SK-N-SH (cell line): ENCODE measurements at regions of chr2 and their contacts with region 1.

Region 1: GRCh38 chr2:204145263-204145751 is 208.7 kb downstream of the ICOS start:
- DNase-seq: peak; percentile 72
- H3K4me3 ChIP-seq: peak overlapping the region in 1 of 2 experiments; percentile 45; a peak in 1 of 4 replicates
- H3K27ac ChIP-seq: no peak overlapping the region
- H3K4me1 ChIP-seq: peaks cover 0 to 2% of the 10 kb centered on the region in 2 experiments; a peak in 1 of 4 replicates
- H3K27me3 ChIP-seq: no peaks in the 10 kb centered on the region; the same call in 1 of the 2 replicates
- CTCF ChIP-seq: peak; percentile 97
- EP300 ChIP-seq: no peak
- RAD21 ChIP-seq: peak; percentile 95

Region 2: GRCh38 chr2:204177977-204178540 is 32.8 kb after region 1 on chr2:
- CTCF ChIA-PET with region 1: interaction called, 10 read pairs
- POLR2A ChIA-PET with region 1: no interaction called
- DNase-seq: no peak
- H3K4me3 ChIP-seq: no peak overlapping the region; a peak in 1 of 4 replicates
- H3K27ac ChIP-seq: peak overlapping the region in 1 of 2 experiments; percentile 50; a peak in 1 of 4 replicates
- H3K4me1 ChIP-seq: peaks cover 0 to 22% of the 10 kb centered on the region in 2 experiments; a peak in 2 of 4 replicates
- H3K27me3 ChIP-seq: no peaks in the 10 kb centered on the region
- CTCF ChIP-seq: peak; percentile 57
- EP300 ChIP-seq: no peak
- RAD21 ChIP-seq: no peak

Region 3: DNA sequence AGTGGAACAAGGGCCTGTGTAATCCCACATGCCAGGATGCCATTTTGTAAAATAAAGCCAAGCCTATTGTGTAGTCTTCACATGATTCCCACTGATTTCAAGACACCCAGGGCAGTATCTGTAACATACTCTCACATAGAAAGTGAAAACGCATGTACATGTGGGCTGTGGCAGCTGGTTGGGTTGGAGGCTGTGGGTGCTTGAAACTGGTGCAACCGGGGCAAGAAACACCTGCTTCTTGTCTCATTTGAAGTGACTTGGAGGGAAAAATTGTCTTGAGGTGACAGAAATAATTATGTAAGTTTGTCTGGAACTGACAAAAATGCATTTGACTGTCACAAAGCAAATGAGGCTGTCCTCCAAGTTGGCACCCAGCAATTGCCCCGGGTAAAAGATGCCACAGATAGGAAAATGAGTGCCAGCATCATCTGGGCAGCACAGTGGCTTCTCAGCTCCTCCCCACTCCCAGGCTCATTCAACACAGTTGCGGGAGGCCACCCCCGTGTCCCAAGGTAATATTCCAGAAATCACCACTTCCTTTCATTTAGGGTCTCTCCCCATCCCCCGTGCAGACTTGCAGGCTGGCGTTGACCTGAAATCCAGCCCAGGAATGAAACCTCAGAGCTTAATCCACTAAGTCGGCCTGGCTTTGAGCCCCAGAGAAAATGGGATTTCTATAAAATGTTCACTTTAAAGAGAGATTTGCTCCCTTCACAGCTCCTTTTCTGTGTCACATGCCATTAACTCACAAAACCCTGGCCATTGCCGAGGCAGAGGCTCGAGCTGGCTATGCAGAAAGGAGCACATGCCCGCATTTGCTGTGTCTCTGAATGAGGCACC is 106.1 kb after region 1 on chr2:
- CTCF ChIA-PET with region 1: interaction called, 10 read pairs
- POLR2A ChIA-PET with region 1: no interaction called
- DNase-seq: no peak
- H3K4me3 ChIP-seq: no peak overlapping the region
- H3K27ac ChIP-seq: peak overlapping the region in 1 of 2 experiments; percentile 22; a peak in 1 of 4 replicates
- H3K4me1 ChIP-seq: peaks cover 0 to 10% of the 10 kb centered on the region in 2 experiments; a peak in 1 of 4 replicates
- H3K27me3 ChIP-seq: no peaks in the 10 kb centered on the region; the same call in 1 of the 2 replicates
- CTCF ChIP-seq: no peak
- EP300 ChIP-seq: no peak
- RAD21 ChIP-seq: no peak

Region 4: GRCh38 chr2:204325468-204325867 is 180.2 kb after region 1 on chr2:
- CTCF ChIA-PET with region 1: interaction called, 12 read pairs
- POLR2A ChIA-PET with region 1: no interaction called
- DNase-seq: peak; percentile 72
- H3K4me3 ChIP-seq: 0 out of 4 replicates have a peak overlapping the region, but pooled peaks of 1 of the 2 experiments have one; percentile 23
- H3K27ac ChIP-seq: no peak overlapping the region
- H3K4me1 ChIP-seq: peaks cover 2 to 5% of the 10 kb centered on the region in 2 experiments; a peak in 2 of 4 replicates
- H3K27me3 ChIP-seq: no peaks in the 10 kb centered on the region
- CTCF ChIP-seq: peak; percentile 92
- EP300 ChIP-seq: no peak
- RAD21 ChIP-seq: peak; percentile 98

Region 5: DNA sequence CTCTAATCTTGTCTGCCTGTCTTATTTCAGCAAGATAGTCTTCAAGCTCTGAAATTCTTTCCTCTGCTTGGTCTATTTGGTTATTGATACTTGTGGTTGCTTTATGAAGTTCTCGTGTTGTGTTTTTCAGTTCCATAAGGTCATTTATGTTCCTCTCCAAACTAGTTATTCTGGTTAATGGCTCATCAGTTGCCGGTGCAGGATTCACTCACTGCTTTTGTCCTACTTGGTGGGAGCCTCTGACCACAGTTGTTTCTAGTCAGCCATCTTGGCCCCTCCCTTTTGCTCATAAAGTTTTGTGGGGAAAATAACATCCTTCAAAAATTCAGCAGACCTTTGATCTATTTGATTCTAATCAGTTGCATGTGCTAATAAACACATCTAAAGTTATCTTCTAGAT is 241.4 kb after region 1 on chr2:
- CTCF ChIA-PET with region 1: no interaction called
- POLR2A ChIA-PET with region 1: no interaction called
- DNase-seq: no peak
- H3K4me3 ChIP-seq: no peak overlapping the region
- H3K27ac ChIP-seq: no peak overlapping the region
- H3K4me1 ChIP-seq: no peaks in the 10 kb centered on the region
- H3K27me3 ChIP-seq: no peaks in the 10 kb centered on the region
- CTCF ChIP-seq: no peak
- EP300 ChIP-seq: no peak
- RAD21 ChIP-seq: no peak

Region 6: DNA sequence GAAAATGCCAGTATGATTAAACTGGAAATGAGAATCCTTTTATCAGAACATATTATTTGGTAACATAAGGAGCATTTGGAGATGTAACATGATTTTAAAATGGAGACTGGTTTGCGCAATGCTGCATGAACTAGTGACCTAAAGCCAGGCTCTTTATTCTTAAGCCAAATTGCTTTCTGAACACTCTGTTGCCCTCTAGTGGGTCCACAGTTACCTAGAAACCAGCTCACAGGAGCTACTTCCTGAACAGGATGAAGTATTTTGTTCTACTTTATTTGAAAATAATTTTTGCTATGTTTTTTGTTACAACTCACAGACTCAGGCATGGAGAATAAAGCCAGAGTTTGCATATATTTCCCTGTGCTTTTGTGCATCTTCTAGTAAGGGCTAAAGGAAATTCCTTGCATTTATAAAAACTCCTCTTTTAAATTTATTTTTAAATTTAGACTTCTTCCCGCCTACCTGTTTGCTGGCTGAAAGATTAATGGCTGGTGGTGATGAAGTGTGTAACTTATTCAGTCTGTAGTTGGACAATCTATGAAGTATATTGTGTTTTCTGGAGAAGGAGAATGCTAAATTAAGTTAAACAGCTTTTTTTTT is 546.7 kb after region 1 on chr2:
- CTCF ChIA-PET with region 1: interaction called, 14 read pairs
- POLR2A ChIA-PET with region 1: no interaction called
- DNase-seq: peak; percentile 34
- H3K4me3 ChIP-seq: no peak overlapping the region; a peak in 1 of 4 replicates
- H3K27ac ChIP-seq: no peak overlapping the region
- H3K4me1 ChIP-seq: no peaks in the 10 kb centered on the region; a peak in 1 of 4 replicates
- H3K27me3 ChIP-seq: no peaks in the 10 kb centered on the region
- CTCF ChIP-seq: peak; percentile 82
- EP300 ChIP-seq: no peak
- RAD21 ChIP-seq: peak; percentile 93